Ascending aorta (tissue), 2 donors: ENCODE measurements at regions of chr6 and their contacts with region 1.

Region 1: GRCh38 chr6:57089687-57090460 is at the start of gene ZNF451:
- DNase-seq: peak; percentile 93 to 99
- H3K4me3 ChIP-seq: peak within 1 kb of the TSS; percentile 68 to 84
- H3K27ac ChIP-seq: peak within 1 kb of the TSS; percentile 79 to 88
- H3K4me1 ChIP-seq: peaks cover 3 to 24% of the 10 kb centered on the region in 2 donors
- H3K27me3 ChIP-seq: no peaks in the 10 kb centered on the region
- CTCF ChIP-seq: no peak
- total RNA-seq, gene ZNF451: 21.5 TPM

Region 2: GRCh38 chr6:57048577-57048976 is 41.3 kb before region 1 on chr6:
- intact Hi-C with region 1: loop called (anchors 5 kb)
- DNase-seq: no peak
- H3K4me3 ChIP-seq: no peak overlapping the region
- H3K27ac ChIP-seq: no peak overlapping the region
- H3K4me1 ChIP-seq: peaks cover 0 to 12% of the 10 kb centered on the region in 2 donors
- H3K27me3 ChIP-seq: no peaks in the 10 kb centered on the region
- CTCF ChIP-seq: no peak